GM13977 (cell line): ENCODE measurements at regions of chr7 and their contacts with region 1.

Region 1: GRCh38 chr7:127708788-127709187 is 56.8 kb downstream of the SND1 start:
- DNase-seq: peak; percentile 39
- CTCF ChIP-seq: peak; percentile 72

Region 2: DNA sequence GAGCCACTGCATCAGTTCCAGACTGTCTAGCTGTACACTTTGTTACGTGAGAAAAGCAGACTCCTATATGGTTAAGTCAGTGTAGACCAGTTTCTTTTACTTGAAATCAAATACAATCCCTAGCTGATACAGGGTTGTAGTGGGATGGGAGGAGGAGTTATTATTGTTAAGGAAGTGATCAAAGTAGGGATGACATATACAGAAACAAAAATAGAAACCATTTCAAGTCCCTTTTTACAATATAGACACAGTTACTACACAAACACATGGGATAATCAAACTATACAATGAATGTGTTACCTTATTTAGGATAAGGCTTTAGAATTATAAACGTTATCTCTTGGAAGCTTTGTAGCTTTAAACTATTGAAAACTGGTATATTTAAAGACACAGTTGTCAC is 689.9 kb before region 1 on chr7:
- in situ Hi-C with region 1: no loop called
- DNase-seq: no peak
- CTCF ChIP-seq: no peak

Region 3: GRCh38 chr7:128031901-128032604 is 323.3 kb after region 1 on chr7:
- in situ Hi-C with region 1: loop called (anchors 25 kb)
- DNase-seq: peak; percentile 87
- CTCF ChIP-seq: no peak

Region 4: GRCh38 chr7:128209229-128210035 is 500.6 kb after region 1 on chr7:
- in situ Hi-C with region 1: loop called (anchors 25 kb)
- DNase-seq: peak; percentile 86
- CTCF ChIP-seq: peak; percentile 98